Transverse colon (tissue), 4 donors: ENCODE measurements at regions of chr5 and their contacts with region 1.

Region 1: DNA sequence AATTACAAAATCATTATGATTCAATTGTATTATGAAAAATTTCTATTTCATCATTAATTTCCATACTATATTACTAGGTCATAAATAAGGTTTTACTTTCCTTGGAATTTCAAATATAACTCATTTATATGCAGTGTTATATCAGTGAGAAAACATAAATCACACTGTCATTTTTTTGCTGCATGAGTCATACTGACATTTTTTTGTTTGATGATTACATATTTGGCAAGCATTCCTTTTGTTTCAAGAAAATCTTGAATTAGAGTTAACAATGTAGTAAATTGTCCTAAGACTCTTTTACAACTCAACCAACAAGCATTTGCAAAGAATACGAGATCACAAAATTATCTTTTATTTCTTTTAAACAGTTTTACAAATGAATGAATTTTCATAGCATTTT is 298.4 kb upstream of the SEMA6A start:
- DNase-seq: no peak
- H3K4me3 ChIP-seq: no peak overlapping the region
- H3K27ac ChIP-seq: no peak overlapping the region
- H3K4me1 ChIP-seq: no peaks in the 10 kb centered on the region
- H3K27me3 ChIP-seq: no peaks in the 10 kb centered on the region
- CTCF ChIP-seq: no peak
- EP300 ChIP-seq: no peak
- POLR2A ChIP-seq: no peak

Region 2: DNA sequence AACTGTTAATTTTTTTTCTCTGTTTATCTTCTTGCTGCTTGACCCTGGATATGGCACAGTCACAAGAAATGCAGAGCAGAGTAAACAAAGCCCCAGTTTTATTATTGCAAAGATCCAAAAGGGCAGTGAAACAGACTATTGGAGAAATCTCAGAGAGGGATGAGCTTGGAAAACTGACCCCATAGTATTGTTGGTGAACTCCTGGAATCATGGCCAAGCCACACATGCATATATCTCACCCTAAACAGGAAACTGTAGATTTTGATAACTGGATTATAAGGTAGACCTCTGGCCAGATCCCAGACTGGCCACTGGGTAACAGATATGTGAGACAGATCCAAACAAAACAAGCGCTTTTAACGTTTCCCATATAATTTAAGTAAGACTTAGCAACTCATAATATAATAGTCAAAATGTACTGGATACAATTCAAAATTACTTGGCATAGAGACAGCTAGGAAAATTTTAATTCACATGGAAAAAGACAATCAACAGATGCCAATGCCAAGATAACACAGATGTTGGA is 34.9 kb before region 1 on chr5:
- in situ Hi-C with region 1: no loop called
- intact Hi-C with region 1: loop called (anchors 1 kb)
- DNase-seq: no peak
- H3K4me3 ChIP-seq: no peak overlapping the region
- H3K27ac ChIP-seq: no peak overlapping the region
- H3K4me1 ChIP-seq: peaks cover 0 to 10% (median 1%) of the 10 kb centered on the region in 4 donors
- H3K27me3 ChIP-seq: peaks cover 57% of the 10 kb centered on the region
- CTCF ChIP-seq: no peak
- EP300 ChIP-seq: no peak
- POLR2A ChIP-seq: no peak